HepG2 (cell line): ENCODE measurements at regions of chr5 and their contacts with region 1.

Region 1: DNA sequence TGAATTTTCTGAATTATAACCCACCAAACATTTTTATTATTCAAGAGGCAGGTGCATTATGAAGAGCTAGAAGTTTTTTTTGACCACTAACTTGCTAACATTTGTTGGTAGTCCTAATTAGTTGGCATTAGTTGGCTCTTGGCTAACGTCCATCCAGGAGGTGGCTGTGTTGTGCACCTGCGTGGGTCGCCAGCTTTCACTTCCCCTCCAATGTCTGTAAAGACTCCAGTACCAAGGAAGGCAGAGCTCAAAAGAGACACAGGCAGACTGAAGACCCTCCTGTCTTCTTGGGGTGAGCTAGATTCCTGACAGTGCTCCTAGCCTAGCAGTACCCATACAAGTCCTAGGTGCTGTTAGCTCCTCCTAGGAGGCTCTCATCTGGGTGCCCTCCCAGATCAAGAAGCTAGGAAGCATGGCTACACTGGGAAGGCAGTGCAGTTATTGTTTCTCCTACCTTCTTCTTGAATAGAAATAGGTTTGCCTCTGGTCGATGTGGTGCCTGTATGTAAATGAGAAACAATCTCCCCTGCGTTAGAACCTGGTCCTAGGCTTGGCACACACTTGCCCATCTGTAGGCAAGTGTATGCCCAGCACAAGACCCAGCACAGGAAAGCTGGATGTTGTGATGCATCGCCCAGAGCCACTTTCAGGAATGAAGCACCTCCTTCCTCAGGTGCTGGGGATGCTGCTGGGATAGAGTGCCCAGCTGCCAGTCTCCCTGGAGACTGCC is 190.9 kb downstream of the ICE1 start:
- DNase-seq: no peak
- ATAC-seq: no peak
- H3K4me3 ChIP-seq: no peak overlapping the region
- H3K27ac ChIP-seq: no peak overlapping the region
- H3K4me1 ChIP-seq: 0 out of 2 replicates have a peak, but pooled peaks cover 4% of the 10 kb centered on the region
- H3K27me3 ChIP-seq: no peaks in the 10 kb centered on the region; a peak in 1 of 5 replicates
- CTCF ChIP-seq: no peak
- EP300 ChIP-seq: no peak
- POLR2A ChIP-seq: no peak
- RAD21 ChIP-seq: no peak

Region 2: GRCh38 chr5:5492087-5492933 is 121.1 kb before region 1 on chr5:
- CTCF ChIA-PET with region 1: no interaction called
- POLR2A ChIA-PET with region 1: no interaction called
- in situ Hi-C with region 1: no loop called
- intact Hi-C with region 1: loop called (anchors 1 kb)
- DNase-seq: peak; percentile 54
- ATAC-seq: peak; percentile 38; the same call in 2 of the 3 replicates
- H3K4me3 ChIP-seq: no peak overlapping the region
- H3K27ac ChIP-seq: no peak overlapping the region
- H3K4me1 ChIP-seq: no peaks in the 10 kb centered on the region; the same call in 1 of the 2 replicates
- H3K27me3 ChIP-seq: peaks cover 0 to 6% of the 10 kb centered on the region in 2 experiments; a peak in 2 of 5 replicates
- CTCF ChIP-seq: peak; percentile 71
- EP300 ChIP-seq: no peak
- POLR2A ChIP-seq: no peak
- RAD21 ChIP-seq: peak; percentile 45; the same call in 1 of the 2 replicates

Region 3: GRCh38 chr5:5560016-5560415 is 53.4 kb before region 1 on chr5:
- CTCF ChIA-PET with region 1: no interaction called
- POLR2A ChIA-PET with region 1: no interaction called
- in situ Hi-C with region 1: no loop called
- intact Hi-C with region 1: no loop called
- DNase-seq: no peak
- ATAC-seq: no peak
- H3K4me3 ChIP-seq: no peak overlapping the region
- H3K27ac ChIP-seq: no peak overlapping the region
- H3K4me1 ChIP-seq: no peaks in the 10 kb centered on the region
- H3K27me3 ChIP-seq: peaks cover 2 to 3% of the 10 kb centered on the region in 2 experiments; a peak in 2 of 5 replicates
- CTCF ChIP-seq: no peak
- EP300 ChIP-seq: no peak
- POLR2A ChIP-seq: no peak
- RAD21 ChIP-seq: no peak

Region 4: GRCh38 chr5:5838493-5838892 is 225.1 kb after region 1 on chr5:
- CTCF ChIA-PET with region 1: no interaction called
- POLR2A ChIA-PET with region 1: no interaction called
- in situ Hi-C with region 1: no loop called
- intact Hi-C with region 1: no loop called
- DNase-seq: no peak
- ATAC-seq: peak; percentile 31; the same call in 1 of the 3 replicates
- H3K4me3 ChIP-seq: no peak overlapping the region
- H3K27ac ChIP-seq: no peak overlapping the region
- H3K4me1 ChIP-seq: no peaks in the 10 kb centered on the region
- H3K27me3 ChIP-seq: no peaks in the 10 kb centered on the region; a peak in 1 of 5 replicates
- CTCF ChIP-seq: no peak
- EP300 ChIP-seq: no peak
- POLR2A ChIP-seq: no peak
- RAD21 ChIP-seq: no peak